Activated CD8-positive, alpha-beta T cell treated with anti-CD3 and anti-CD28 coated beads for 36 hours (primary cell): ENCODE measurements at regions of chr3 and their contacts with region 1.

Region 1: GRCh38 chr3:152356870-152357276 is 88.1 kb downstream of the MBNL1 start:
- DNase-seq: peak; percentile 57
- ATAC-seq: peak; percentile 51
- H3K4me3 Mint-ChIP-seq: no peak overlapping the region
- H3K27ac Mint-ChIP-seq: peak overlapping the region; percentile 84
- H3K4me1 Mint-ChIP-seq: peaks cover 72% of the 10 kb centered on the region
- H3K27me3 Mint-ChIP-seq: no peaks in the 10 kb centered on the region
- CTCF ChIP-seq: no peak

Region 2: GRCh38 chr3:152281133-152281713 is 75.7 kb before region 1 on chr3:
- CTCF ChIA-PET with region 1: no interaction called
- POLR2A ChIA-PET with region 1: no interaction called
- intact Hi-C with region 1: loop called (anchors 2 kb)
- DNase-seq: peak; percentile 36
- ATAC-seq: peak; percentile 43
- H3K4me3 Mint-ChIP-seq: peak overlapping the region; percentile 48
- H3K27ac Mint-ChIP-seq: peak overlapping the region; percentile 89
- H3K4me1 Mint-ChIP-seq: peaks cover 73% of the 10 kb centered on the region
- H3K27me3 Mint-ChIP-seq: no peaks in the 10 kb centered on the region
- CTCF ChIP-seq: no peak